Activated T-helper 2 cell treated with anti-CD3 and anti-CD28 coated beads, Interferon-gamma antibody, Interleukin-2, Interleukin-4, amounts not matched to agents 10 μg/mL and 5 μg/mL and 100 μg/mL, durations not matched to agents 14 hours and 24 hours and 36 hours (primary cell): ENCODE measurements at regions of chr2 and their contacts with region 1.

Region 1: GRCh38 chr2:173402405-173402974 is 47.8 kb downstream of the CDCA7 start:
- DNase-seq: peak; percentile 58
- H3K4me3 Mint-ChIP-seq: no peak overlapping the region
- H3K27ac Mint-ChIP-seq: no peak overlapping the region
- H3K4me1 Mint-ChIP-seq: peaks cover 6% of the 10 kb centered on the region
- H3K27me3 Mint-ChIP-seq: peaks cover 63% of the 10 kb centered on the region

Region 2: DNA sequence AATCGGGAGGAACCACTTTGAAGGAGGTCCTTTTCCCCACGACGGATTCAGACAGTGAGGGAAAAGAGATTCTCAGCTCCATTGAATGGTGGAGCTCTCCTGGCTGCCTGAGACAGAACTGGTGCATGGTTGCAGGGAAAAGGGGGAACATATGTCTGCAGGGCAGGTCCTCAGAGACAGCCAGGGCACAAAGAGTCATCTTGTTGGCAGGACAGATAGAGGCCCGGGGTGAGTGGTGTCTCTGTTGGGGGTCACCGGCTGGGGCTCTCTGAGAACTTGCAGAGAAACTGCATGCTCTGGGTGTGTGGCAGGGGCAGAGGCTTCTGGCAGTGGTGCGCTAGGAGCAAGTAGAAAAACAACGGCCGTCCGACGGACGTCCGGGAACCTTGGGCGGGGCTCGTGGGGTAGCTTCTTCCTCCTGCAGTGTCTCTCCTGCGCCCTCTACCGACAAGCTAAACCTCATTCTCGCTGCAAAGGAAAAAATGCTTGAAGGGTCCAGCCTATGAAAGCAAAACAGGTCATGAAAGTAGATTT is 46.5 kb after region 1 on chr2:
- intact Hi-C with region 1: loop called (anchors 1 kb)
- DNase-seq: peak; percentile 51
- H3K4me3 Mint-ChIP-seq: peak overlapping the region; percentile 13
- H3K27ac Mint-ChIP-seq: no peak overlapping the region
- H3K4me1 Mint-ChIP-seq: peaks cover 3% of the 10 kb centered on the region
- H3K27me3 Mint-ChIP-seq: peaks cover 23% of the 10 kb centered on the region